Left colon (tissue), 2 donors: ENCODE measurements at regions of chr5 and their contacts with region 1.

Region 1: GRCh38 chr5:79560771-79561524 is 47.0 kb upstream of the HOMER1 start:
- DNase-seq: no peak
- ATAC-seq: no peak

Region 2: GRCh38 chr5:80083101-80083890 is 522.3 kb after region 1 on chr5:
- intact Hi-C with region 1: loop called in 1 of 2 experiments (anchors 10 kb)
- DNase-seq: no peak
- ATAC-seq: peak; percentile 77